ENCODE measurements at regions of chr1 and their contacts with region 1.

Region 1: DNA sequence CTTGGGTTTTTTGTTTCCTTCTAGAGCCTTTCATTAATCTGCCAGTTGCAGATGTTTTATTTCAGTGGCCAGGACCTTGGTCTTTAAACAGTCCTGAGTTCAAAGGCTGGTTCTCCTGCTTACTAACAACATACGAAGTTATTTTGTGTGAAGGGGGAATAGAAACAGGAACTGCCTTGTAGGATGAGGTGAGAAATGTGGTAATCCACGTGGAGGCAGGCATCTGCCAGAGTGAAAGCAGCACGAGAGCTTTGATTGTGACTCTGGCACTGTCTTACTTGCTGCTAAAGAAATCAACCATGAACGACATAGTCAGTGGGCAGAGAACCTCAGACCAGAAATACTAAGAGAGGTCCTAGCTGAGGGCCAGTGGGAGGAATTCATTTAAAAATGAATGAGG is 30.4 kb downstream of the TMEM63A start:
- DNase-seq: no peak
- H3K4me3 ChIP-seq: no peak overlapping the region
- H3K27ac ChIP-seq: no peak overlapping the region
- H3K4me1 ChIP-seq: peaks cover 0 to 37% (median 18%) of the 10 kb centered on the region in 4 donors
- H3K27me3 ChIP-seq: no peaks in the 10 kb centered on the region
- CTCF ChIP-seq: no peak
- EP300 ChIP-seq: no peak
- POLR2A ChIP-seq: no peak

Region 2: GRCh38 chr1:225388372-225388771 is 463.4 kb before region 1 on chr1:
- in situ Hi-C with region 1: no loop called
- intact Hi-C with region 1: no loop called
- DNase-seq: no peak
- H3K4me3 ChIP-seq: no peak overlapping the region
- H3K27ac ChIP-seq: no peak overlapping the region
- H3K4me1 ChIP-seq: no peaks in the 10 kb centered on the region
- H3K27me3 ChIP-seq: no peaks in the 10 kb centered on the region
- CTCF ChIP-seq: no peak
- EP300 ChIP-seq: no peak
- POLR2A ChIP-seq: no peak

Region 3: GRCh38 chr1:225603538-225604354 is 248.1 kb before region 1 on chr1:
- in situ Hi-C with region 1: no loop called
- intact Hi-C with region 1: no loop called
- DNase-seq: no peak
- H3K4me3 ChIP-seq: no peak overlapping the region
- H3K27ac ChIP-seq: peak overlapping the region; percentile 28 to 67 (median 50)
- H3K4me1 ChIP-seq: peaks cover 0 to 24% (median 3%) of the 10 kb centered on the region in 4 donors
- H3K27me3 ChIP-seq: no peaks in the 10 kb centered on the region
- CTCF ChIP-seq: no peak
- EP300 ChIP-seq: no peak
- POLR2A ChIP-seq: no peak

Region 4: GRCh38 chr1:225828706-225829345 is 23.0 kb before region 1 on chr1:
- in situ Hi-C with region 1: no loop called
- intact Hi-C with region 1: loop called (anchors 1 kb)
- DNase-seq: no peak
- H3K4me3 ChIP-seq: no peak overlapping the region
- H3K27ac ChIP-seq: no peak overlapping the region
- H3K4me1 ChIP-seq: peaks cover 0 to 4% (median 0%) of the 10 kb centered on the region in 4 donors
- H3K27me3 ChIP-seq: no peaks in the 10 kb centered on the region
- CTCF ChIP-seq: no peak
- EP300 ChIP-seq: no peak
- POLR2A ChIP-seq: no peak

Region 5: DNA sequence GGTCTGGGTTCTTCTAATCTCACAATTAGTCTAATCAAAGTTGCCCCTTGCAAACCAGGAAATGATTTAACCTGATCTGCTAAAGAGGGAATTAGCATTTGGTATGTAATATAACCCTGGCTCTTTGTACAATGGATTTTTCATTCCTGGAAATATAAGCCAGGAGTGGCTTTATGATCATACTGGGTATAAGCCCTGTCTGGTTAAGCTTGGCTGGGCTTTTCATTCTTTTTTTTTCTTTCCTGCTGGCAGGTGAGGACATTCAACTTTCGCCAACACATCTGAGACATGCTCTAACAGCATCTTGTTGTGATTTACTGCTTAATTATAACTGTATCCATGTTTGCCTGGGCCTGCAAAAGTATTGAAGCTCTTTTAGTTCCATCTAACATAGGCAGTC is 167.8 kb after region 1 on chr1:
- in situ Hi-C with region 1: no loop called
- intact Hi-C with region 1: no loop called
- DNase-seq: no peak
- H3K4me3 ChIP-seq: no peak overlapping the region
- H3K27ac ChIP-seq: peak overlapping the region; percentile 24 to 51 (median 43)
- H3K4me1 ChIP-seq: peaks cover 0 to 14% (median 0%) of the 10 kb centered on the region in 4 donors
- H3K27me3 ChIP-seq: no peaks in the 10 kb centered on the region
- CTCF ChIP-seq: no peak
- EP300 ChIP-seq: no peak
- POLR2A ChIP-seq: no peak

Region 6: DNA sequence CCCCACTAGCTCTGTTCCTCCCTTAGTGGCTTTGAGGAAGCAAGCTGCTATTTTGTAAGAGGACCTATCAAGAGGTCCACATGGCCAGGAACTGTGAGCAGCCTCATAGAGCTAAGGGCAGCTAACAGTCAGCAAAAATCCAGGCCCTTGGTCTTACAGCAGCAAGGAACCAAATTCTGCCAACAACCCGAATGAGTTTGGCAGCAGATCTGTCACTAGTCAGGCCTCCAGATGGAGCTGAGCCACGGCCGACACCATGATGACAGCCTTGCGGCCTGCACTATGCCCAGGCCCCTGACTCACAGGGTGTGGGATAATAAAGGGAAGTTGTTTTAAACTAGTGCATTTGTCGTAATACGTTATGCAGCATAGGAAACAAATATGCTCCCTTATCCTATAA is 182.7 kb after region 1 on chr1:
- in situ Hi-C with region 1: no loop called
- intact Hi-C with region 1: no loop called
- DNase-seq: peak; percentile 86
- H3K4me3 ChIP-seq: no peak overlapping the region
- H3K27ac ChIP-seq: peak overlapping the region; percentile 62 to 85 (median 76)
- H3K4me1 ChIP-seq: peaks cover 0 to 37% (median 25%) of the 10 kb centered on the region in 4 donors
- H3K27me3 ChIP-seq: no peaks in the 10 kb centered on the region
- CTCF ChIP-seq: no peak
- EP300 ChIP-seq: no peak
- POLR2A ChIP-seq: peak; percentile 33

Measured in transverse colon (tissue), 4 donors.